Gastrocnemius medialis (tissue), 4 donors: ENCODE measurements at regions of chr4 and their contacts with region 1.

Region 1: DNA sequence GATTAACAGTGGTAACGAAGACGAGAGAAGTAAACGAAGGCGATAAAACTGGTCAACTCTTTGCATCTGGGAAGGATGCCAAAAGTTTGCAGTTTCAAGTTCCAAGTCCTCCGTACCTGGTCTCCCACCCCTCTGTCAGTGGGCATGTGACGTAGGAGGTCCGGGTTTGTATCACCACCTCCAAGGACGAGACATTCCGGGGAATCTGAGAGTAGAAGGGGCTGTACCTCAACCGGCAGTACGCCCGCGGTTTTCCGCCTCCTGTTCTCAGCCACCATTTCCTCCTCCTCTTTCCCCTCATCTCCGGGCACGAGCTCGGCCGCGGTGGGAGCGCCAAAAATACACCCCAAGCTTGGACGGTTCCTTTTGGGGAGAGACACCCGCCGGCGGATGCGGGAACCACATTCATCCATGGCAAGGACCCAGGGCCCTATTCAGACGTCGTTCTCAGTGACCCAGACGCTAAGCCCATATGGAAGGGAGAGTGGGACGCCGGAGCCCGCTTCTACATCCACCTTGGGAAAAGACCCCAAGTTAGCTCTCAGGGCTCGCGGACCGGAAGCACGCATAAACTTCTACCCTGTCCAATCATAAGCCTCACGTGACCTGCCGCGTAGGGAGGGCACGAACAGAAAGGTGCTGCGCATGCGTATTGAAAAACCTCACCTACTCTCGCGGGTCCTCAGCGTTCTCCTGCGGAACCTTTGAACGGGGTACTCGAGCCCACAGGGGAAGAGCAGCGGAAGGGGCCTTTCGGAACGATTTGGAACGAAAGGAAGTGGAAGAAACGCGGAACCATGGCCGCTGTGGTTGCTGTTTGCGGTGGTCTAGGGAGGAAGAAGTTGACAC is at the starts of genes HELQ and MRPS18C:
- DNase-seq: peak; percentile 98
- ATAC-seq: peak; percentile 99 to 100
- H3K4me3 ChIP-seq: peak within 1 kb of the TSS; percentile 79 to 98 (median 92)
- H3K27ac ChIP-seq: peak within 1 kb of the TSS; percentile 93 to 99 (median 98)
- H3K4me1 ChIP-seq: peaks cover 20 to 31% of the 10 kb centered on the region in 2 donors
- H3K27me3 ChIP-seq: no peaks in the 10 kb centered on the region
- CTCF ChIP-seq: peak in 3 of 5 experiments; percentile 7 to 44 (median 19)
- POLR2A ChIP-seq: peak; percentile 77 to 78
- total RNA-seq, gene HELQ: 13.1 to 18.4 (median 15.5) TPM
- total RNA-seq, gene MRPS18C: 22.2 to 57.9 (median 33.8) TPM

Region 2: GRCh38 chr4:82428969-82429727 is 1026.4 kb before region 1 on chr4:
- in situ Hi-C with region 1: loop called in 3 of 4 experiments (anchors 25 kb)
- intact Hi-C with region 1: loop called (anchors 10 kb)
- DNase-seq: peak; percentile 84 to 91
- ATAC-seq: peak; percentile 74 to 76
- H3K4me3 ChIP-seq: peak overlapping the region; percentile 81 to 99 (median 96)
- H3K27ac ChIP-seq: peak overlapping the region; percentile 94 to 100 (median 98)
- H3K4me1 ChIP-seq: peaks cover 32 to 38% of the 10 kb centered on the region in 2 donors
- H3K27me3 ChIP-seq: no peaks in the 10 kb centered on the region
- CTCF ChIP-seq: peak; percentile 82 to 99 (median 98)
- POLR2A ChIP-seq: peak; percentile 90 to 94

Region 3: DNA sequence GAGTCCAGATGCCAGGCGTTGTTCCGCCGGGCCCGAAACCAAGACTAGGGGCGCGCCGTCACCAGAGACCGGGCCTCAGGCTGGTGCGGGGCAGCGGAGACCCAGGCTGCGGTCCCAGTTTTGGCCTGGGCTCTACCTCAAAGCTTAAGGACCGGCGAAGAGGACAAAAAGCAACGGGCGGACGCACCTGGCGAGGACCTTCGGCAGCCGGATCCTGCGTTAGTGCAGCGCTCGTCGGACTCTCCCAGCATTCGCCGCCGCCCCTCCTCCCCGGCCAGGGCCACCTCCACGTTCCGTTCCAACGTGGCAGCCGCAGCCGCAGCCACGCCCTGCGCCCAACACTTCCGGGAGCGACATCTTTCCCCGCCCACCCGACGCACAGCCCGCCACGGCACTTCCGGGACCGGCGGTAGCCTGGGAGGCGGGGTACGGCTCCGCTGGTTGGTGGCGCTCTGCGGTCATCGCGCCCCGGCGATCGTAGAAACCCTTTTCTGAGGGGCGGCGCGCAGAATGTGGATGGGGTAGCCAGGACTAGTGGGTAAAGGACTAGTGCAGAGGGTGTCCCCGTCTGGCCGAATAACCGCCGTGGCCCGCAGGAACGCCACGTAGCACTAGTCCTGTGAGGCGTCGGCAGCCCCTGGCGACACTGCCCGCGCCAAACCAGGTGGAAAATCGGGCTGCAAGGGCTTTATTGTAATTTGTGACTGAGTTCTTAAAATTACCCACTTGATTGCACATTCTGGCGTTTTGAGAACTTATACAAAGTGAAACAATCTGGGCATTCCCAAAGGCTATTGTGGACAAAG is 564.4 kb before region 1 on chr4 and contains the start of gene SEC31A:
- in situ Hi-C with region 1: loop called in 2 of 4 experiments (anchors 25 kb)
- intact Hi-C with region 1: loop called (anchors 10 kb)
- DNase-seq: peak; percentile 92 to 94
- ATAC-seq: peak; percentile 93 to 95
- H3K4me3 ChIP-seq: peak within 1 kb of the TSS; percentile 85 to 96 (median 88)
- H3K27ac ChIP-seq: peak within 1 kb of the TSS; percentile 96 to 97 (median 96)
- H3K4me1 ChIP-seq: peaks cover 32 to 34% of the 10 kb centered on the region in 2 donors
- H3K27me3 ChIP-seq: no peaks in the 10 kb centered on the region
- CTCF ChIP-seq: peak in 1 of 5 experiments; percentile 22
- POLR2A ChIP-seq: peak; percentile 93
- total RNA-seq, gene SEC31A: 95.2 to 112 (median 105) TPM

Region 4: DNA sequence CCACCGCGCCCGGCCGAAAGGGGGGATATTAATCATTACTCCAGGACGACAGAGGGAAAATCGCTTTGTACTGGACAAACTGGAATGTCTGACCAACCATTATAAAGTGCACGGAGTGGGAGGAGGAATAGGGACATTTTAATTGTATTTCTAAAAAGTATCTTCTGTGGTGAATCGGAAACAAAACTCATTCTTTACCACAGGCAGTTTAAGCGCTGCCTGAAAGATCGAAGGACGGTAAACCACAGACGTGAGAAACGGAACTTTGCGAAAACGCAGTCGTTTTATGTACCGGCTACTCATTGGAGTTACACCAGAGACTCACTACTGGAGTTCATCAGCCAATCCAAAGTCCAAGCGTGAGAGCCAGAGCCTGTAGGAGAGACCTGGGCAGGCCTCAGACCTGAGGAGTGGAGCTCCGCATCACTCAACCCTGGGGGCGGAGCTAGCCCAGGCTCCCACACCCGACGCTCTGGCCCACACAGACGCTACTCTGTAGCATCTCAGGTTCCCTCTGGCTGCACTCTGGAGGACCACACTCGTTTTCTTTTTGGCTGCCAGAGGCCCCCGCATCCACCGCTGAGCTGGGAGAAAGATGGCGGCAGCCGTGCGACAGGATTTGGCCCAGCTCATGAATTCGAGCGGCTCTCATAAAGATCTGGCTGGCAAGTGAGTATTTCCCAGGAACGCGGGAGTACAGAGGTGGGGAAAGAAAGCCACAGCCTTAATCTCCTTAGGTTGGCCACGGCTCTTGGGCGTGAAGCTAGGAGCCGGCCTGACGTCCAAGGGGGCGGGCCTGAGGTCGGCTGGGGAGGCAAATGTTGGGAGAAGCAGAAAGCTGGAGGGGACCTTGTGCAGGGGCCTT is 420.6 kb before region 1 on chr4 and contains the start of gene COPS4:
- in situ Hi-C with region 1: loop called in 2 of 4 experiments (anchors 25 kb)
- intact Hi-C with region 1: no loop called
- DNase-seq: peak; percentile 98 to 99
- ATAC-seq: peak; percentile 98 to 99
- H3K4me3 ChIP-seq: peak within 1 kb of the TSS; percentile 84 to 97 (median 90)
- H3K27ac ChIP-seq: peak within 1 kb of the TSS; percentile 91 to 93 (median 92)
- H3K4me1 ChIP-seq: peaks cover 26 to 33% of the 10 kb centered on the region in 2 donors
- H3K27me3 ChIP-seq: no peaks in the 10 kb centered on the region
- CTCF ChIP-seq: peak in 4 of 5 experiments; percentile 31 to 68 (median 52)
- POLR2A ChIP-seq: peak; percentile 57 to 79
- total RNA-seq, gene COPS4: 67.9 to 151 (median 91.9) TPM

Region 5: DNA sequence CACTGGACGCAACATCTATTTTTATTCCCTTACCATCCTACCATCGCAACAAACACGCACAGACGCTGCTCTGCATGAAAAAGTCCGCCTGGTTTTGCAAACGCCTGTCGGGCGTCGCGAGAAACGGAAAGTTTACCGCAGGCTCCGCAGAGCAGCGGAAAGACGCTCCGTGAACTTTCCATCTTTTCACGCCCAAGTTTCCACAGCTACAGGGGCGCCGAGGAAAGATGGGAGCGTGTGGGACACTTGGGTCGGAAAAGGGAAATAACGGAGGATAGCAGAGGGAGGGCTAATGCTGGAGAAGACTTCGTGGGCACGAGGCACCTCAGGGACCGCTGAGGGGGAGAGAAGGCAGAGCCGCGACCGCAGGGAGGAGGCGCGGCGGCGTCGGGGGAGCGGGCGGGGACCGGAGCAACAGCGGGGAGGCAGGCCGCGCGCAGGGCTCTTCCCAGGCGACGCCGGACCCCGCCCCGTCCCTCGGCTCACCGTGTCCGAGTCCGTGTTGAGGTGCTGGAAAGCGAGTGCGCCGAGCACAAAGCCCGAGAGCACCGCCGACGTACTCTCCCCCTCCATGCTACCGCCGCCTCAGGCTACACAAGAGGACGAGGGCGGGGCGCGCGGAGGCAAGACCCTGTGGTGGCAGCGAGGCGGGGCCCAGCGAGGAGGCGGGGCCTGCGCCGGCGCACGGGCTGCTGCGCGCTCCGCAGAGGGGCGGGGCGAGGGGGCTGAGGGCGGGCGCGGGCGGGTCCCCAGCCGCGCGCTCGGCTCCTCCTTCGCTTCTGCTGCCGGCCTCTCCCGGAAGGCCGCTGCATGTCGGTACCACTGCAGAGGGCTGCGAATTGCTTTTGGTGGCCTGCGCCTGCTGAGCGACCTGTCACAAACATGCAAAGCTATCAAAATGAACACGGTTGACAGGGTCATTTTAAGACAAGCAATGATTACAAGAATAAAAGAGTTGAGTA is 29.3 kb after region 1 on chr4 and contains the start of gene ABRAXAS1:
- in situ Hi-C with region 1: no loop called
- intact Hi-C with region 1: loop called (anchors 1 kb)
- DNase-seq: peak; percentile 88 to 93
- ATAC-seq: peak; percentile 92 to 98
- H3K4me3 ChIP-seq: peak within 1 kb of the TSS; percentile 86 to 95 (median 90)
- H3K27ac ChIP-seq: peak within 1 kb of the TSS; percentile 81 to 96 (median 90)
- H3K4me1 ChIP-seq: peaks cover 13 to 18% of the 10 kb centered on the region in 2 donors
- H3K27me3 ChIP-seq: no peaks in the 10 kb centered on the region
- CTCF ChIP-seq: no peak
- POLR2A ChIP-seq: peak; percentile 92 to 96
- total RNA-seq, gene ABRAXAS1: 4.8 to 12.4 (median 7.0) TPM

Region 6: GRCh38 chr4:83947125-83947829 is 491.8 kb after region 1 on chr4:
- in situ Hi-C with region 1: no loop called
- intact Hi-C with region 1: no loop called
- DNase-seq: no peak
- ATAC-seq: no peak
- H3K4me3 ChIP-seq: no peak overlapping the region
- H3K27ac ChIP-seq: no peak overlapping the region
- H3K4me1 ChIP-seq: no peaks in the 10 kb centered on the region
- H3K27me3 ChIP-seq: no peaks in the 10 kb centered on the region
- CTCF ChIP-seq: no peak
- POLR2A ChIP-seq: no peak